SK-N-SH (cell line): ENCODE measurements at regions of chr1 and their contacts with region 1.

Region 1: GRCh38 chr1:213015099-213016050 is at the start of gene ANGEL2:
- DNase-seq: peak; percentile 92
- H3K4me3 ChIP-seq: peak within 1 kb of the TSS; percentile 95 to 96
- H3K27ac ChIP-seq: peak within 1 kb of the TSS; percentile 88 to 100
- H3K4me1 ChIP-seq: peaks cover 6 to 9% of the 10 kb centered on the region in 2 experiments; a peak in 3 of 4 replicates
- H3K27me3 ChIP-seq: no peaks in the 10 kb centered on the region
- CTCF ChIP-seq: no peak
- EP300 ChIP-seq: no peak
- RAD21 ChIP-seq: no peak
- polyA plus RNA-seq, gene ANGEL2: 14.0 and 17.8 TPM in 2 replicates

Region 2: DNA sequence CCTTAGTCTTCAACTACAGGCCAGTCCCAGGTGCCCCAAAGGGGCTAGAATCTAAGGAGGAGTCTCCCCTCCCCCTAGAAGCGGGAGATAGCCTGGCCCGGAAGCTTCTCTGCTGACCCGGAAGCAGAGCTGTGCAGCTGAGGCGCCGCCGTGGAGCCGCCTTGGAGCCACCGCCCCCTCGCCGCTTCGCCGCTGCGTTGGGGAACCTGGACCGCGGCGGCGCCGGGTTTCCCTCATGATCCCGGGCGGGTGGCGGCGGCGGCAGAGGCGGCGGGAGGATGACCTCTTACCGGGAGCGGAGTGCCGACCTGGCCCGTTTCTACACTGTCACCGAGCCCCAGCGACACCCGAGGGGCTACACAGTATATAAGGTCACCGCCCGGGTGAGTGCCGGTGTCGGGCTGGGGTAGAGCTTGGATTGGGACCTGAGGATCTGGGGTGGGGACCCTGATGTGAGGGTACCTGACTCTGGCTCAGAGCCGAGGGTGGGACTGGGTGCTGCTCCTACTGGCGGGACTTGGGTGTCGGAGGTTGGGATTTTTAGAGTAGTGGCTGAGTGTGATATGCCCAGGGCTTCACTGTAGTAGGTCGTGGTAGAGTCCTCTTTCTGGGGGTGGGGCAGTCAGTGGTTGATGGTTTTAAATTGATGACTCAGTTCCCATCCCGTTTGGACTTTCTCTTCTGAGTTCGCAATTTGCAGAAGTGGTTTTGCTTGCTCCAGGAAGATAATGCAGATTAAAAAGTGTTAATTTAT is 35.9 kb after region 1 on chr1 and contains the start of gene RPS6KC1:
- CTCF ChIA-PET with region 1: interaction called, 3 read pairs
- POLR2A ChIA-PET with region 1: interaction called, 12 read pairs
- DNase-seq: peak; percentile 93
- H3K4me3 ChIP-seq: peak within 1 kb of the TSS; percentile 87 to 93
- H3K27ac ChIP-seq: peak within 1 kb of the TSS; percentile 85 to 87
- H3K4me1 ChIP-seq: peaks cover 6 to 16% of the 10 kb centered on the region in 2 experiments; a peak in 3 of 4 replicates
- H3K27me3 ChIP-seq: no peaks in the 10 kb centered on the region
- CTCF ChIP-seq: no peak; the same call in 1 of the 2 replicates
- EP300 ChIP-seq: no peak; a peak in 1 of 4 replicates
- RAD21 ChIP-seq: no peak
- polyA plus RNA-seq, gene RPS6KC1: 7.8 and 11.4 TPM in 2 replicates